HEK293 (cell line): ENCODE measurements at regions of chr12 and their contacts with region 1.

Region 1: GRCh38 chr12:219891-220352 is 6.0 kb upstream of the SLC6A12 start:
- H3K4me3 ChIP-seq: no peak overlapping the region
- H3K27ac ChIP-seq: no peak overlapping the region
- H3K4me1 ChIP-seq: no peaks in the 10 kb centered on the region; the same call in 1 of the 2 replicates
- CTCF ChIP-seq: peak; percentile 94

Region 2: DNA sequence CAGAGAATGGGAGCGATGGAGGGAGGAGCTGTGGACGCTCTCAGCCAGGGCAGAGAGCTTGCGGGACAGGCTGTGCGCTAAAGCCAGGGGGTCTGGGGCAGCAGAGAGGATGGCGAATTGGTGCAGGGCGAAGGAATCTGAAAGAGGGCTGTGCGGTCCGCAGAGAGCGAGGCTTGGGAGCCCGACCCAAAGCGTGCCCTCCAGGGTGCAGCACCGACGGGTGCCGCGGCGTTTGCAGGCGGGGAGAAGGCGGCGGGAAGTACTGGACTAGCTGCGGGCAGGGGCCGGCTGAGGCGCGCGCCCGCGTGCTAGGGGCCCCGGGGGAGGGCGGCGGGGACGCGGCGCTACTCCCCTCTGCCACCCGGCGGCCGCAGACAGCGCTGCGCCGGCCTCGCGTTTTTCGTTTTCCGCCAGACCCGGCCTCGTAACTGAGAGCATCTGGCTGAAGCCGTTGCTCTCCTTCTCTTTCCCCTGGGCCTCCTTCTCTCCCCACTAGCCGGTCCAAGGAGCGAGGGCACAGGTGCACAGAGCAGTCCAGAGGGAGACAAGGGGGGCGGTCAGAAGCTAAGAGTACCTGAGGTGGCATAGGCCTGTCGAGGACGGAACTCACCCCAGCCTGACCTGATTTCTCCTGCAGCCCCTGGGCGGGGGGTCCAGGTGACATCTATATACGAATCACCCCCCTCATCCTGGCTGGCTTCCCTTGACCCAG is 30.9 kb before region 1 on chr12:
- CTCF ChIA-PET with region 1: interaction called, 13 read pairs
- POLR2A ChIA-PET with region 1: no interaction called
- H3K4me3 ChIP-seq: peak overlapping the region; percentile 32
- H3K27ac ChIP-seq: no peak overlapping the region
- H3K4me1 ChIP-seq: no peaks in the 10 kb centered on the region
- CTCF ChIP-seq: peak; percentile 40

Region 3: DNA sequence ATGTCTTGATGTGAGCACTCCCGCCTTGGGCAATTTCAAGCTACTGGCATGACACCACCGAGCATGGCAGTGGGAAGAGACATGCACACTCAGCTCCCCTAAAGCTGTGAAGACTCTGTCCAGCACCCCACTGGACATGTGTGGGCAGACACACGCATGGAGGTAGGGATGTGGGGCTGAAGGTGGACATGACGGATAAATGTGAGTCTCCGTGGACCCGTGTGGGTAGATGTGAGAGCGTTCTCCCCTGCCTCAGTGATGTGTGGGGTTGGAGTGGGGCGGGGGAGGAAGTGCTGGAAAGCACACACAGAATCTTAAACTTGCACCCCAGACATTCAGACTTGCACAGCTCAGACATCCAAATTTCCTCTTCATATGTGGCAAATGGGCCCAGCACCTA is 18.6 kb before region 1 on chr12:
- CTCF ChIA-PET with region 1: interaction called, 12 read pairs
- POLR2A ChIA-PET with region 1: interaction called, 3 read pairs
- H3K4me3 ChIP-seq: no peak overlapping the region
- H3K27ac ChIP-seq: no peak overlapping the region
- H3K4me1 ChIP-seq: peaks cover 7% of the 10 kb centered on the region
- CTCF ChIP-seq: no peak